MCF 10A (cell line): ENCODE measurements at regions of chrX and their contacts with region 1.

Region 1: GRCh38 chrX:115642895-115643530 is 82.0 kb downstream of the PLS3 start:
- DNase-seq: peak; percentile 65
- H3K4me3 Mint-ChIP-seq: no peak overlapping the region
- H3K27ac Mint-ChIP-seq: no peak overlapping the region
- H3K4me1 Mint-ChIP-seq: no peaks in the 10 kb centered on the region
- H3K27me3 Mint-ChIP-seq: peaks cover 64% of the 10 kb centered on the region
- CTCF ChIP-seq: peak; percentile 84

Region 2: DNA sequence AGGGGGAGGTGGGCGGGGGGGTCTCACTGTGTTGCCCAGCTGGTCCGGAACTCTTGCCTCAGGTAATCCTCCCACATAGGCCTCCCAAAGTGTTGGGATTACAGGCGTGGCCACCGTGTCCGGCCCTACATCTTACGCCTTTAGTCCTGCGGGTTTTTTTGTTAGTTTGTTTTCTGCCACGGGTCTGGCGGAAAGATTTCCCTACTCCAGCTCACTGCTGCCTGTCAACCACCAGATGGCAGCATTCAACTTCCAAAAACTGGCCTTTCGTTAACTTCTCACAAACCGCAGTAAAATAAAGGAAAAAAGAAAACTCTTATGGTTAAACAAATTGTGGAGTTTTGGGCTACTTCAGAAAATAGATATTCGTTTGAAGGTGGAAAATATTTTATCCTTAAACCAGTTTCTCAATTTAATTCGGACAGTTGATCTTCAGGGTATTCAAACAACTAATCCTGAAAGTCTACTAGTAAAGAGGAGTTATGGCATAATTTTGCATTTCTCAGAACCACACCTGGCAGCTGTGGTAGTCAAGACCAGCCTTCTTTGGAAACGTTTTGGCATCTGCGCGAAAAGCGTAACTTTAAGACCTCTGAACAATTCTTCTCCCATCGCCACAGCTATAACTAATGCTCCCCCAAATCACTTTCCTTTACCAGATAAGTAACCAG is 312.4 kb before region 1 on chrX:
- CTCF ChIA-PET with region 1: interaction called, 88 read pairs
- POLR2A ChIA-PET with region 1: interaction called, 3 read pairs
- intact Hi-C with region 1: loop called (anchors 1 kb)
- DNase-seq: peak; percentile 70
- H3K4me3 Mint-ChIP-seq: no peak overlapping the region
- H3K27ac Mint-ChIP-seq: no peak overlapping the region
- H3K4me1 Mint-ChIP-seq: no peaks in the 10 kb centered on the region
- H3K27me3 Mint-ChIP-seq: peaks cover 55% of the 10 kb centered on the region
- CTCF ChIP-seq: peak; percentile 71

Region 3: GRCh38 chrX:115337491-115338144 is 305.4 kb before region 1 on chrX:
- CTCF ChIA-PET with region 1: interaction called, 88 read pairs
- POLR2A ChIA-PET with region 1: interaction called, 3 read pairs
- intact Hi-C with region 1: no loop called
- DNase-seq: peak; percentile 6
- H3K4me3 Mint-ChIP-seq: no peak overlapping the region
- H3K27ac Mint-ChIP-seq: no peak overlapping the region
- H3K4me1 Mint-ChIP-seq: no peaks in the 10 kb centered on the region
- H3K27me3 Mint-ChIP-seq: peaks cover 87% of the 10 kb centered on the region
- CTCF ChIP-seq: no peak

Region 4: GRCh38 chrX:115344885-115345614 is 298.0 kb before region 1 on chrX:
- CTCF ChIA-PET with region 1: interaction called, 5 read pairs
- POLR2A ChIA-PET with region 1: no interaction called
- intact Hi-C with region 1: loop called (anchors 5 kb)
- DNase-seq: peak; percentile 93
- H3K4me3 Mint-ChIP-seq: no peak overlapping the region
- H3K27ac Mint-ChIP-seq: peak overlapping the region; percentile 69
- H3K4me1 Mint-ChIP-seq: no peaks in the 10 kb centered on the region
- H3K27me3 Mint-ChIP-seq: peaks cover 41% of the 10 kb centered on the region
- CTCF ChIP-seq: no peak

Region 5: GRCh38 chrX:115625572-115626301 is 17.3 kb before region 1 on chrX:
- CTCF ChIA-PET with region 1: interaction called, 19 read pairs
- POLR2A ChIA-PET with region 1: interaction called, 3 read pairs
- intact Hi-C with region 1: no loop called
- DNase-seq: no peak
- H3K4me3 Mint-ChIP-seq: no peak overlapping the region
- H3K27ac Mint-ChIP-seq: no peak overlapping the region
- H3K4me1 Mint-ChIP-seq: no peaks in the 10 kb centered on the region
- H3K27me3 Mint-ChIP-seq: peaks cover 22% of the 10 kb centered on the region
- CTCF ChIP-seq: no peak